Posterior cingulate gyrus (tissue), 11 donors: ENCODE measurements at regions of chr19 and their contacts with region 1.

Region 1: DNA sequence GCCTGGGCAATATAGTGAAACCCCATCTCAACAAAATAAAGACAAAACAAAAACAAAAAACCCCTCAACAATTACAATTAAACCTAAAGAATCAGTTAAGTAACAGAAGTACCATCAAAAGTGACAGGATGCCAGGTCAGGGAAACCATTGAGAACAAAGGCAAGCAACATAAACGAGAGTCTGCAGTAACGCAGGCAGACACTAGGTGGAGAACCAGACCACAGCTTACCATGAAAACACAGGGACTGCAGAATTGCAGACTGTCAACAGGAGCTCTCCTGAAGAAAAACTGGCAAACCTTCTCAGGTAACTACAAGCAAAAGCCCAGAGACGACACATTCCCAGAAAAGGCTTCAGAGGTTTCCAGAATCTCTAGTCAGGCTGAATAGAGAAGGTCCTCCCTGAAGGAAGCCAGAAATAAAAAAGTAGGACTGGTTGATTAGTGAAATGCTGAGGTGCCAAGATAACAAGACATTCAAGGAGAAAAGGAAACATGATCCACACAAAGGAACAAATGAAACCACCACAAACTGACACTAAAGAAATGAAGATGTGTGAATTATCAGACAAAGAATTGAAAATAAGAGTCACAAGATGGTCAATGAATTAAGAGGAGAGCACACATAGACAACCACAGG is 2.2 kb upstream of the ZNF665 start:
- DNase-seq: peak in 7 of 10 donors; percentile 46 to 93 (median 76)

Region 2: GRCh38 chr19:53076977-53077376 is 118.4 kb before region 1 on chr19:
- intact Hi-C with region 1: loop called (anchors 5 kb)
- DNase-seq: peak; percentile 41 to 96 (median 74)

Region 3: DNA sequence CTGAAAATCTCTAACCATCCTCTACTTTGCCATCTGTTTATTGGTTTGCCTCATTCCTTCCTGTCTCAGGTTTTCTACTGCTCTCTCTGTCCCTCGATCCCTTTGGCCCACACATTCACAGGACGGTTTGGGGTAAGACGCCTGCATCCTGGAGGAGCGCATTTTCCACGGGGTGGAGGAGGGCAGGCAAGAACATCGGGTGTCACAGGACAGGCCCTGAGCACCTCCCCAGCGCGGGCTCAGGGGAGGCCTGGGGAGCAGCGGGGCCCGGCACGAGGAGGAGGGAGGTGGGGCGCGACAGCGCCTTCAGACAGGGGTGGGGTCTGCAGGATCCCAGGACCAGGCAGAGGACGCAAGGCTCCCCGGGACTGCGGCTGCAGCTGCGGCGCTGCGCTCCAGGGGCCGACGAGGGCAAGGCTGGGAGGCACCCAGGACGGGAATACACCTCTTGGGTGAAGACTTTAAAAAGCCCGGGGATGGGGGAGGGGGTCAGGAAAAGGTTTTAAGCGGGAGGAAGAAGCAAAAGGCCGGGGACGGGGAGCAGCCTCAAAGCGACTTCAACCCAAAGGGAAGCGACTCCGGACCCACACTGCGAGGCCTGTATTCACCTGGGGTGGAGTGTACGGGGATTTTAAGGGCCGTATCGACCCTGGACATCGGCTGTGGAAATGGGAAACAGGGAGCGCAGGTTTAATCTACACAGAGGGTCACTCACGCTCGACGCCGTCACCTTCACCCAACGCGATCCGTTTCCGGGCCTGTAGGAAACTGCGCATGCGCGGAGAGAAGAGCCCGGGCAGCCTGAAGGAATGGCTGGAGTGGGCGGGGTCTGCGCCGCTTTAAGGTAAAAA is 63.0 kb before region 1 on chr19 and contains the start of gene ZNF415:
- intact Hi-C with region 1: no loop called
- DNase-seq: peak; percentile 74 to 98 (median 84)

Region 4: GRCh38 chr19:53158119-53158656 is 37.2 kb before region 1 on chr19:
- intact Hi-C with region 1: loop called (anchors 1 kb)
- DNase-seq: peak in 5 of 10 donors; percentile 9 to 86 (median 16)

Region 5: GRCh38 chr19:53224606-53225005 is 29.2 kb after region 1 on chr19:
- intact Hi-C with region 1: no loop called
- DNase-seq: no peak

Region 6: DNA sequence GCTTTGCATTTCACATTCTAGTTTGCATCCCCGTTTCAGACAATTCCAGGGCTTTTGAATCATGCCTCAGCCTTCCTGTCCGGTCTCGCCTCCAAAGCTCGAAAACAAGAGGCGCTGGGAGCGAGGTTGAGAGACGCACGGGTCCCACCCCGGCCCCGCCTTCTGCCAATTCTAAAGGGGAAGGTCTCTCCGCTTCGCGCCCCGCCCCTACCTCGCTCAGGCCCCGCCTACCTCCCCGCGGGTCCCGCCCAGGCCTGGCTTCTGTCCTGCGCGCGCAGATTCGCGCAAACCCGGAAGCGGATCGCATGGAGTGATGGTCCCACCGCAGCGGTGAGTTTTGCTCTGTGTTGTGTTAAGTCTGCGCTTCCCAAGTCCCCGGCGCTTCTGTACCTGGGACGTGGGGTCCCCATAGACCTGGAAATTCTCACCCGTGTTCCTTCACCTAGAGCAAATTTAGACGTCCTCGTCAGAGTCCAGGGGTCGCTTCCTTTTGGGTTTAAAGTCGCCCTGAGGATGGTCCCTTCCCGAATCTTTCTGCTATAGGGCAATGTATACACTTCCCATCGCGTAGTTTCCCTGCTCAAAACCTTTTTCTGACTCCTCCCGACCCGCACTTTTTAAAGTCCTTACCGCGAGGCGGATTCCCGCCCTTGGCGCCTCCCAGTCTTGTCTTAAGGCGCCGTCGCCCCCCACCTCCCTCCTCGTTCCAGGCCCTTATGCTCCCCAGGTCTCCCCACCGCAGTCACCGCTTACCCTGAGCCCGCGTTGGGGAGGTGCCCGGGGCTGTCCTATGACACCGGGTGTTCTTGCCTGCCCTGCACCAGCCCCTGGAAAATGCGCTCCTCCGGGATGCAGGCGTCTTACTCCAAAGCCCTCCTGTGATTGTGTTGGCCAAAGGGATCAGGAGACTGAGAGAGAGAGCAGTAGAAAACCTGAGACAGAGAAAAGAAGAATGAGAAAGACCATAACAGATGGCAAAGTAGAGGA is 138.4 kb after region 1 on chr19 and contains the start of gene ZNF845:
- intact Hi-C with region 1: loop called (anchors 10 kb)
- DNase-seq: peak; percentile 79 to 99 (median 93)

Region 7: GRCh38 chr19:53365134-53365898 is 169.9 kb after region 1 on chr19 and contains the start of gene ZNF525:
- intact Hi-C with region 1: loop called (anchors 5 kb)
- DNase-seq: peak; percentile 78 to 99 (median 90)

Region 8: DNA sequence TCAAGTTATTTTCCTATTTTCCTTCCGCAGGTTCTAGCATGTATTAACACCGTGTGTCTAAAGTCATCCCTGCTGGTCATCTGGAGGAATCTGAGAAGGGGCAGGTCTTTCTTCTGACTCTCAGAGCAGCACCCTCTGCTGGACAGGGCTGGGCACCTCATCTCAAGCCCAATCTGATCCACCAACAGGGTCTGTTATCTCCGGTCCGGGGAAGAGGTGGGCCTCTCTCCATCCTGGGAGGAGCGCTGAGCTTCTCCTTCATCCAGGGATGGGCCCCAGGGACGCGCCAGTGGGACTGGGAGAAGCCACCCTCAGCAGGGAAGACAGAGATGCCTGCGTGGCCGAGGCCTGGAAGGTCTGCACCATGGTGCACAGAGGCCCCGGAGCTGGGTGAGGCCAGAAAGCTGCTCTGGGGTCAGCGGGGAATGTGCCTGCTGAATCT is 316.6 kb after region 1 on chr19:
- intact Hi-C with region 1: loop called (anchors 5 kb)
- DNase-seq: peak in 5 of 10 donors; percentile 32 to 88 (median 47)